ENCODE measurements at regions of chr1 and their contacts with region 1.

Region 1: DNA sequence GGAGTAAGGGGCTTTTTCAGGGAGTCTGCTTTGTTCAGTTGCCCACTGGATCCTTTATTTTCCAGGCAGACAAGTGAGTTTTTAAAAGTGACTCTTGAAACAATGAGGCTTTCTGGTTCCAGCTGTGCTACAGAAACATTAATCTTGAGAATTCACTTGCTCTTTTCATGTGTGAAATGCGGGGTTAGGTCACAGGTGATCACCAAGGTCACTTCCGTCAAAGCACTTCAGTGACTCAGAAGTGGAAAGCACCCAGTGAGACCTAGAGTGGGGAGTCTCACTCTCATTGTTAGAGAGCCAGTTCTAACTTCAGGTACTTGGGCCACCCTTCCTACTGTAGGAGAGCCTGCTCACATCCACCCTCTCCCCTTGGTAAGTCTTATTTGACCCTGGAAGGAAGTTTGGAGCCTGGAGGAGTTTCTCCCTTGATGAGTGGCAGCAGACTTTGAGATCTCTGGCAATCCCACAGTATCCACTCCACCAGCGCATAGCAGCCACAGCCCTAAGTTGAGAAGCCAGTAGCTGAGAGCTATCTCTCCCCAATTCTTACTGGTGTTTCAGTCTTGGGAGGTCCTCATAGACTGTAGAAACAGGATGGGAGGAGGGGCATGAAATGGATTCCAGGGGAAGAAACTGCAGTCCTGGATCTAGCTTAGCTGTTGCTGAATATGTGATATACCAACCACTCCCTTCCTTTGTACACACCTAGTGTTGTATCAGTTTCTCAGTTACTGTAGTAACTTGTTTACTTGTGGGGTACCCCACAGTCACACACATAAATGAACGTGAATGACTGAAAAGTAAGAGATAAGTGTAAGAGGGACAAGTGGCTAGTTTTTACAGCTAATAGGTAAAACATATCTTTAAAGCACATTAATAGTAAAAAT is 3.1 kb downstream of the TACSTD2 start:
- DNase-seq: peak; percentile 35
- ATAC-seq: no peak
- H3K4me3 ChIP-seq: peak overlapping the region; percentile 100
- H3K27ac ChIP-seq: peak overlapping the region; percentile 16; the same call in 1 of the 2 replicates
- H3K4me1 ChIP-seq: peaks cover 29% of the 10 kb centered on the region
- H3K27me3 ChIP-seq: no peaks in the 10 kb centered on the region
- CTCF ChIP-seq: no peak

Region 2: DNA sequence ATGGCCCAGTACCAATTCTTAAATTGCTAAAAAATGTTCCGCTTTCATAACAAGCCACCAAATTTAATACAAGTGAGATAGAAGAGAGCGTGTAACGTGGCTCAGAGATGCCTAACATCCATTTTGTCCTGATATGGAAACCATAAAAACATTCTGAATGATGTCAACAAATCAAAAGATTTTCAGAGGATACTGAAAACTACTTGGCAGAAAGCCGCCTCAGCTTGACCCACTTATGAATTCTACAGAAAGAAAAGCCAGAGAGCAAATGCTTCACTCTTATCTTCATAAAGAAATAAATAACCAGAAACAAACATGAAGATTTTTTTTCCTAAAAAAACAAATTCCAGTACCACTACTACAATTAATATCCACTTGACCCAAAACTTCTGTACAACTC is 68.7 kb before region 1 on chr1:
- CTCF ChIA-PET with region 1: no interaction called
- POLR2A ChIA-PET with region 1: no interaction called
- intact Hi-C with region 1: no loop called
- DNase-seq: no peak
- ATAC-seq: no peak
- H3K4me3 ChIP-seq: no peak overlapping the region
- H3K27ac ChIP-seq: no peak overlapping the region
- H3K4me1 ChIP-seq: no peaks in the 10 kb centered on the region
- H3K27me3 ChIP-seq: no peaks in the 10 kb centered on the region
- CTCF ChIP-seq: no peak

Region 3: GRCh38 chr1:58515794-58516401 is 58.0 kb before region 1 on chr1:
- CTCF ChIA-PET with region 1: no interaction called
- POLR2A ChIA-PET with region 1: no interaction called
- intact Hi-C with region 1: loop called (anchors 2 kb)
- DNase-seq: peak; percentile 81
- ATAC-seq: peak; percentile 63; the same call in 1 of the 2 replicates
- H3K4me3 ChIP-seq: no peak overlapping the region
- H3K27ac ChIP-seq: no peak overlapping the region
- H3K4me1 ChIP-seq: no peaks in the 10 kb centered on the region
- H3K27me3 ChIP-seq: no peaks in the 10 kb centered on the region
- CTCF ChIP-seq: peak; percentile 82

Region 4: DNA sequence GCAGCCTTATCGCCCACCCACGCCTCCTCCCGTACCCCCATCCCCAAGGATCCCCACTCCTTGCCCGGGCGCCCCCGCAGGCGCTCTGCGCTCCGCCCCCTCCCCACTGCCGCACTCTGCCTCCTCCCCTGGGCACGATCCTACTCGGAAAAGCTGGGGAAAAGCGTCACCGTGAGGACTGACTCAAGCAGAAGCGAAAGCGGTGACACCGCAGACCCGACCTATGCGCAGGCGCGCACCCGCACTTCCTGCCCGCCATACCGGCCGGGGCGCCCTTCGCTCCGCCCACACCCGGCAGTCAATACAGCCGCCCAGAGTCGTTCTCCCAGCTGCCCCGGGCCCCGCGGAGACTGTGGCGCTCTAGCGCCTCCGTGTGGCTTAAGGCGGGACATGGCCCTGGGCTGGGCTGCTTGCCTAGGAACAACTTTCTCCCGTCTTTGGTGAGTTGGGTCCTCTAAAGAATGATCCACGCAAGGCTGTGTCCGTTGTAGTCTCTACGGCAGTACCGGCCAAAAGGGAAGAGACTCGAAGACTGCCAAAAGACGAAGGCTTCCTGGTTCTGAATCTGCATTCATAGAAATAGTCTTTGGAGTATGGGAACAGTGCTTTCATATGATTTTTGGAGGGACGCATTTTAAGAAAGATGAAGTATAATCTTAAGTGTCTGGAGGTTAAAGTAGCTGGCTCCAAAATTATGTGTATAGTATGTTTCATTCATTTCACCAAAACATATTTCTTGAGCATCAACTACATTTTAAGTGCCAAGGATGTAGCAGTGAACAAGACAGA is 27.2 kb before region 1 on chr1 and contains the start of gene OMA1:
- CTCF ChIA-PET with region 1: no interaction called
- POLR2A ChIA-PET with region 1: interaction called, 18 read pairs
- intact Hi-C with region 1: loop called (anchors 1 kb)
- DNase-seq: peak; percentile 96
- ATAC-seq: peak; percentile 92
- H3K4me3 ChIP-seq: peak within 1 kb of the TSS; percentile 82
- H3K27ac ChIP-seq: peak within 1 kb of the TSS; percentile 66
- H3K4me1 ChIP-seq: peaks cover 11% of the 10 kb centered on the region
- H3K27me3 ChIP-seq: no peaks in the 10 kb centered on the region
- CTCF ChIP-seq: peak; percentile 90
- total RNA-seq, gene OMA1: 9.2 and 16.1 TPM in 2 replicates

Region 5: GRCh38 chr1:58608297-58608696 is 34.3 kb after region 1 on chr1:
- CTCF ChIA-PET with region 1: no interaction called
- POLR2A ChIA-PET with region 1: no interaction called
- intact Hi-C with region 1: no loop called
- DNase-seq: no peak
- ATAC-seq: no peak
- H3K4me3 ChIP-seq: no peak overlapping the region
- H3K27ac ChIP-seq: no peak overlapping the region
- H3K4me1 ChIP-seq: no peaks in the 10 kb centered on the region
- H3K27me3 ChIP-seq: no peaks in the 10 kb centered on the region
- CTCF ChIP-seq: no peak

Region 6: DNA sequence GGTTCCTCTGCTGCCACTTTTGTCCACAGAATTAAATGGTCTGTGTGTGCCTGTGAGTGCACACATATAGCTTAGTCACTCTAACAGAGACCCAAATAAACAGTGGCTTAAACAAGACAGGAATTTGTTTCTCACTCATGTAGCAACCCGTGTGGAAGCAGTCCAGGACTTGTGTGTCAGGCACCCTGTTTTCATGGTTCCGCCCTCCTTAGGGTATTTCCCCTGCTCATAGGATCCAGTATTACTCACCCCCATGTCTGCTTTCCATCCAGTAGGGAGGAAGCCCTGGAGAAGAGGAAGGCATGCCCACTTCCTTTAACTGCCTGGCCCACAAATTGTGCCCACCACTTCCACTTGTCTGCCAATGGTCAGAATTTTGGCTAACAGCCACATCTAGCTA is 44.4 kb after region 1 on chr1:
- CTCF ChIA-PET with region 1: no interaction called
- POLR2A ChIA-PET with region 1: no interaction called
- intact Hi-C with region 1: loop called (anchors 2 kb)
- DNase-seq: peak; percentile 91
- ATAC-seq: peak; percentile 94
- H3K4me3 ChIP-seq: no peak overlapping the region
- H3K27ac ChIP-seq: peak overlapping the region; percentile 60
- H3K4me1 ChIP-seq: peaks cover 34% of the 10 kb centered on the region
- H3K27me3 ChIP-seq: no peaks in the 10 kb centered on the region
- CTCF ChIP-seq: no peak

Region 7: GRCh38 chr1:58652651-58653184 is 78.8 kb after region 1 on chr1:
- CTCF ChIA-PET with region 1: interaction called, 3 read pairs
- POLR2A ChIA-PET with region 1: no interaction called
- intact Hi-C with region 1: loop called (anchors 2 kb)
- DNase-seq: peak; percentile 84
- ATAC-seq: peak; percentile 84
- H3K4me3 ChIP-seq: no peak overlapping the region
- H3K27ac ChIP-seq: no peak overlapping the region
- H3K4me1 ChIP-seq: peaks cover 10% of the 10 kb centered on the region
- H3K27me3 ChIP-seq: no peaks in the 10 kb centered on the region
- CTCF ChIP-seq: peak; percentile 93